Activated naive CD4-positive, alpha-beta T cell treated with anti-CD3 and anti-CD28 coated beads for 36 hours (primary cell): ENCODE measurements at regions of chr3 and their contacts with region 1.

Region 1: GRCh38 chr3:72134989-72135451 is 350.1 kb upstream of the PROK2 start:
- DNase-seq: peak; percentile 18
- H3K4me3 Mint-ChIP-seq: peak overlapping the region; percentile 49
- H3K27ac Mint-ChIP-seq: peak overlapping the region; percentile 78
- H3K4me1 Mint-ChIP-seq: peaks cover 47% of the 10 kb centered on the region
- H3K27me3 Mint-ChIP-seq: peaks cover 4% of the 10 kb centered on the region

Region 2: DNA sequence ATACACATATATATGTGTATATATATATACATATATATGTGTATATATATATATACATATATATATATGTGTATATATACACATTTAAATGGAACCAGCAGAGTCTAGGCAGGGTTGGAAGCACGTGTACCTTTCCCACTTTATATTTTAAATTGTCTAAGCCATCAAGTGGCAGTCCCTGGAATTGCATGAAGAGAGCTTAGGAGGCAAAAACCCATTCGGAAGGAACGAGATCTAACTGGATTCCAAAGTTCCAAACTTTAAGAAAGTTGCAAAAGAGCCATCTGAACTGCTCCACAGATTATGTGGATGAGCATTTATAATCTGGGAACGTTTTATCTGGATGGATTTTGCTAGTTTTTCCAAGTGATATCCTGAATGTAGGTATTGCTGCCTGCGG is 738.0 kb before region 1 on chr3:
- CTCF ChIA-PET with region 1: no interaction called
- intact Hi-C with region 1: loop called (anchors 1 kb)
- DNase-seq: peak; percentile 35
- H3K4me3 Mint-ChIP-seq: peak overlapping the region; percentile 5
- H3K27ac Mint-ChIP-seq: no peak overlapping the region
- H3K4me1 Mint-ChIP-seq: peaks cover 81% of the 10 kb centered on the region
- H3K27me3 Mint-ChIP-seq: no peaks in the 10 kb centered on the region

Region 3: DNA sequence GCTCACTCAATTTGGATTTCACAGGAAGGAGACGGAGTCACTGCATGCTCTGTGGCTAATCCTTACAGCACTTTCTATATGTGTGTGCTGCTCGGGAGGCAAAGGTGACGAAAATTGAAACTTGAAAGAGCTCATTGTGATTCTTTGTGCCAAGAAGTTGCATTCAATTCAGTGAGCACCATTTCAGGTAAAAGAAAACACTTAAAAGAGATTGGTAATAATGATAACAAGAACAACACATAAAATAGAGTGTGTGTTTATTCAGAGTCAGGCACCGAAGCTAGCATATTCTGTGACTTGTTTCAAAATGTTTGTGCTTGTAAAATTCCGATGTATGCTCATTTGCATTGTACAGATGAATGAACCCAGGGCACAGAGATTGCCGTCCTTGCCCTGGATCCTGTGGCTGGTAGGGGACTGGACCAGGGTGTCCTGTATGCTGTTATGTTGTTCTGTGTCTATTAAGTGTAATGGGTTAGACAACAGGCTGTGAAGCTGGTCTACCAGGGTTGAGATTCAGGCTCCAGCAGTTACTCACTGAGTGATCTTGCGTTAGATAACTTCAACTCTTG is 156.8 kb before region 1 on chr3:
- CTCF ChIA-PET with region 1: no interaction called
- intact Hi-C with region 1: loop called (anchors 1 kb)
- DNase-seq: peak; percentile 76
- H3K4me3 Mint-ChIP-seq: no peak overlapping the region
- H3K27ac Mint-ChIP-seq: peak overlapping the region; percentile 82
- H3K4me1 Mint-ChIP-seq: peaks cover 33% of the 10 kb centered on the region
- H3K27me3 Mint-ChIP-seq: peaks cover 18% of the 10 kb centered on the region

Region 4: GRCh38 chr3:72234391-72234790 is 99.4 kb after region 1 on chr3:
- CTCF ChIA-PET with region 1: no interaction called
- intact Hi-C with region 1: no loop called
- DNase-seq: no peak
- H3K4me3 Mint-ChIP-seq: no peak overlapping the region
- H3K27ac Mint-ChIP-seq: no peak overlapping the region
- H3K4me1 Mint-ChIP-seq: no peaks in the 10 kb centered on the region
- H3K27me3 Mint-ChIP-seq: no peaks in the 10 kb centered on the region

Region 5: GRCh38 chr3:72259755-72260587 is 125.0 kb after region 1 on chr3:
- CTCF ChIA-PET with region 1: no interaction called
- intact Hi-C with region 1: loop called (anchors 1 kb)
- DNase-seq: peak; percentile 46
- H3K4me3 Mint-ChIP-seq: no peak overlapping the region
- H3K27ac Mint-ChIP-seq: peak overlapping the region; percentile 82
- H3K4me1 Mint-ChIP-seq: peaks cover 58% of the 10 kb centered on the region
- H3K27me3 Mint-ChIP-seq: no peaks in the 10 kb centered on the region

Region 6: DNA sequence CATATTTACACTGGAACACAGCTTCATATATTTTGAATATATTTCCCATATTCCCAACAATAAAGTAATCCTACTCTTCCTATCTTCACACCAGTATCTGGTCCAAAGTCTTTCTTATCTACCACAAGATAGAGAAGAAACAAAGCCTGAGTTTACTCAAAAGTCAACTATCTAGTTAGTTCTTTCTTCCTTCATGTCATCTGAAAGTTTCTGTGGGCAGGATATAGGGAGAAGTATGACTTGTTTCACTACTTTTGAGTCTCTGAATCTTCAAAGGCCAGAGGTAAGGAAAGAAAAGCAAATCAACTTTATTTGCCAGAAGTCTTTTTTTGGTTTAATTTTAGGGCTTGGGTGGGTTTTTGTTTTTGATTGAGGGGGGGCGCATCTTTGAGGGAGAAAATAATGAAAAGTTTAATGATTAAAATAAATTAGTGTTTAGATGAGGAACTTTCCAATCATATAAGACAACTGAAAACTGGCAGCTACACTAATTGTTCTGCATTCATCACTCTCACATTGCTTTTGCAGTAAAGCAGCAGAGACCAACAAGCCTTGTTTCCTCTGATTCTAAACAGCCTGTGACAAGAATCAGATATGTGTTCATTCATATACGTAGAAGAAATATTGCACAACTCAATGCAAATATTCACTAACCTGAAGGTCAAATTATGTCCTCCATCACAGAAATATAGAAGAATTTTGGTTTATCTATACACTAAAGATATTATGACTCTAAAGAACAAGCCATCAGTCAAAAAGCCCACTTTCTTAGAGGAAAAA is 291.8 kb after region 1 on chr3:
- CTCF ChIA-PET with region 1: no interaction called
- intact Hi-C with region 1: loop called (anchors 1 kb)
- DNase-seq: no peak
- H3K4me3 Mint-ChIP-seq: no peak overlapping the region
- H3K27ac Mint-ChIP-seq: no peak overlapping the region
- H3K4me1 Mint-ChIP-seq: peaks cover 70% of the 10 kb centered on the region
- H3K27me3 Mint-ChIP-seq: no peaks in the 10 kb centered on the region

Region 7: DNA sequence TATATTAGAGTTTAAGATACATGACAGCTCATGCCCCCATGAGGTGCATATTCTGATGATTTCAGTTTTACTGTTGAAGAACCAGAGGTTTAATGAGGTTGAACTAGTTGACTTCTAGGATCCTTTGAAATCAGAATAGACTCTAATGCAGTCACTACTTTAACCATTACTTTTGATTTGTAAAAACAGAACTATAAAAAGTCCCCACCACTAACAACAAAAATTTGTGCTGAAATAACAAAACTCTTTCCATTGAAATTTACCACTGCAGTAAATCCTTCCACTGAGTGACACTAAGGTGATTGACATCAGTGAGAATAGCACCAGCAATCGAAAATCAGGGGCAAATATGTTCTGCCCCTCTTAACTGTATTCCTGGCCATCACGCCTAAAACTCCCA is 499.1 kb after region 1 on chr3:
- CTCF ChIA-PET with region 1: no interaction called
- intact Hi-C with region 1: loop called (anchors 2 kb)
- DNase-seq: peak; percentile 19
- H3K4me3 Mint-ChIP-seq: no peak overlapping the region
- H3K27ac Mint-ChIP-seq: no peak overlapping the region
- H3K4me1 Mint-ChIP-seq: peaks cover 39% of the 10 kb centered on the region
- H3K27me3 Mint-ChIP-seq: peaks cover 10% of the 10 kb centered on the region